ENCODE measurements at regions of chr16 and their contacts with region 1.

Region 1: GRCh38 chr16:14529010-14529669 is 100.9 kb downstream of the PARN start:
- DNase-seq: peak; percentile 16 to 85
- H3K4me3 ChIP-seq: peak overlapping the region in 1 of 2 donors; percentile 52
- H3K27ac ChIP-seq: peak overlapping the region in 1 of 2 donors; percentile 62
- H3K4me1 ChIP-seq: peaks cover 9 to 24% of the 10 kb centered on the region in 2 donors
- H3K27me3 ChIP-seq: no peaks in the 10 kb centered on the region
- CTCF ChIP-seq: peak; percentile 62 to 83 (median 74)

Region 2: DNA sequence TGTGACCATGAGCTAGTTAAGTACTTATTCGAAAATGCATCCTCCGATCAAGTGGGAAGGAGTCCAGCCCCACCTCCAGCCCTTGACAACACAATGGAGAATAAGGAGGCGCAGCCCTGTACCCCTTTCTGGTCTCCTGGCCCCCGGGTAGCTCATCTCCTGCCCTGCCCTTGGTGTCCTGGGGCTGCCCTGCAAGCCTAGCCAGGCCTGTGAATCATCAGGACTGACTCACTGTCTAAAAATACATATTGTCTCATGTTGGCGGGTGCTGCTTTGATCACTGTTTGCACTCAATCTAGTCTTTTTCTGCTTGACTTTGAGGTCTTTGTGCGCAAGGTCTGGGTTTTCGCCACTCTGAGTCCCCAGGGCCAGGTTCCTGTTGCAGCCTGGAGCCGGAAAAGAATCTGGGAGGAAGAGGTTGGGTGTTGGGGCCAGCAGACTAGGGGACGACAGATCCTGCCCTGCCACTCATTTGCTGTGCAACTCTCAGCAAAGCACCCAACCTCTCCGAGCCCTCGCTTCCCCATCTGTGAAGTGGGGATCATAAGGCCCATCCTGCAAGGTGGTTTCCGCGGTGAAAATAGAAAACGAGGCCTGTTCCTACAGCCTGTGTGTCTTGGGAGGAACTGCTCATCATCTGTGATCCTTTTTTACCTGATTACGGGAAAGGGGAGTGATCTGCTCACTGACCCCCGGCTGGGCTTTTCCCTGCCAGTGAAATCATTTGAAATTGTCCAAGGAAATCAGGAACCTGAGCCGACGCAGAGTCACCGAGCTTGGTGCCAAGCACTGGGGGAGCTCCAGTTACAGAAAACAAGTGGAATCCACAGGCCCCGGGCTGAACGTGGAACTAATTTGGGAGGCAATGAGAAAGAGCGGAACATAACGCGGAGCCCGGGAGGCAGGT is 129.5 kb before region 1 on chr16:
- intact Hi-C with region 1: loop called (anchors 2 kb)
- DNase-seq: peak; percentile 29 to 90
- H3K4me3 ChIP-seq: peak overlapping the region in 1 of 2 donors; percentile 28
- H3K27ac ChIP-seq: peak overlapping the region; percentile 59 to 87
- H3K4me1 ChIP-seq: peaks cover 9 to 19% of the 10 kb centered on the region in 2 donors
- H3K27me3 ChIP-seq: no peaks in the 10 kb centered on the region
- CTCF ChIP-seq: peak in 1 of 3 experiments; percentile 9

Region 3: GRCh38 chr16:14501331-14502255 is 27.5 kb before region 1 on chr16:
- intact Hi-C with region 1: loop called (anchors 1 kb)
- DNase-seq: peak; percentile 66 to 93
- H3K4me3 ChIP-seq: peak overlapping the region in 1 of 2 donors; percentile 33
- H3K27ac ChIP-seq: peak overlapping the region; percentile 77 to 84
- H3K4me1 ChIP-seq: peaks cover 10 to 25% of the 10 kb centered on the region in 2 donors
- H3K27me3 ChIP-seq: no peaks in the 10 kb centered on the region
- CTCF ChIP-seq: no peak

Measured in ascending aorta (tissue), 2 donors.